AG04450 (cell line): ENCODE measurements at regions of chr3 and their contacts with region 1.

Region 1: GRCh38 chr3:38521391-38521987 is 25.3 kb downstream of the EXOG start:
- DNase-seq: peak; percentile 49
- H3K4me3 ChIP-seq: no peak overlapping the region
- H3K27ac ChIP-seq: no peak overlapping the region
- H3K27me3 ChIP-seq: no peaks in the 10 kb centered on the region
- CTCF ChIP-seq: peak; percentile 88

Region 2: GRCh38 chr3:38039101-38039898 is 482.2 kb before region 1 on chr3 and contains the start of gene DLEC1:
- CTCF ChIA-PET with region 1: no interaction called
- POLR2A ChIA-PET with region 1: no interaction called
- DNase-seq: no peak
- H3K4me3 ChIP-seq: peak within 1 kb of the TSS; percentile 60
- H3K27ac ChIP-seq: no peak within 1 kb of the TSS
- H3K27me3 ChIP-seq: no peaks in the 10 kb centered on the region
- CTCF ChIP-seq: no peak
- polyA plus RNA-seq, gene DLEC1: 0.04 and 0.06 TPM in 2 replicates

Region 3: GRCh38 chr3:38108649-38109579 is 412.6 kb before region 1 on chr3:
- CTCF ChIA-PET with region 1: no interaction called
- POLR2A ChIA-PET with region 1: no interaction called
- DNase-seq: no peak
- H3K4me3 ChIP-seq: no peak overlapping the region
- H3K27ac ChIP-seq: no peak overlapping the region
- H3K27me3 ChIP-seq: no peaks in the 10 kb centered on the region
- CTCF ChIP-seq: no peak

Region 4: DNA sequence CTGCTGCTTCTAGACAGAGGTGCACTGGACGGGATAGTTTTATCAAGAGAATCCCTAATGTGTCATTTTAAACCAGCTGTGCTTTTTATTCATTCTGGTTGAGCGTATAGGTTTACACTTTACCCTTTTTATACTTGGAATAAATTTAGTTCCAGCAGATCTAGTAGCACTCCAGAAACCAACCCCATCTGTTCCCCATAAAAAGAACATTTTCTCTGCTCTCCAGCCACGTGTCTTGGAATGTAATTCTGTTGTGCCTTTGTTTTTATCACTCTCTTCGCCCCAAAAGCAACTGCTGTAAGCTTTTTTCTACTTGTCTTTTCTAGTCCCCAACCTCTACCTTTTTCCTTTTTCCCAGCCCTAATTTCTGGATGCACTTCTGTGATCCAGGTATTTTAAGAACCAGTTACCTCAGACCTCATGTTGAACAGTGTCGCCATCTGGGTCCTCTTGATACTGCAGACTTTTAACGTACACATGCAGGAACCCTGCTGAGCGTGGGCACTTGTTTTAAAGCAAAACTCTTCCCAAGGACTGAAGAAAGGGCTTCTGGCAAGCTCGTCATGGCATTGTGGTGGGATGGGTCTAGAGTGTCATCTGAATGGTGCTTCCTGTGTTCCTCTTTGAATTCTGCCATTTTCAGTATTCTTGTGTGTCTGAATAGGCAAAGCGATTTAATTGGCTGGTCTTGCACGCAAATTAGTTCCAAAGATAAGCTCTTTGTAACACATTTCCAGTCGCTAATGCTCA is 31.0 kb before region 1 on chr3:
- CTCF ChIA-PET with region 1: interaction called, 15 read pairs
- POLR2A ChIA-PET with region 1: no interaction called
- DNase-seq: no peak
- H3K4me3 ChIP-seq: no peak overlapping the region
- H3K27ac ChIP-seq: no peak overlapping the region
- H3K27me3 ChIP-seq: no peaks in the 10 kb centered on the region
- CTCF ChIP-seq: no peak

Region 5: DNA sequence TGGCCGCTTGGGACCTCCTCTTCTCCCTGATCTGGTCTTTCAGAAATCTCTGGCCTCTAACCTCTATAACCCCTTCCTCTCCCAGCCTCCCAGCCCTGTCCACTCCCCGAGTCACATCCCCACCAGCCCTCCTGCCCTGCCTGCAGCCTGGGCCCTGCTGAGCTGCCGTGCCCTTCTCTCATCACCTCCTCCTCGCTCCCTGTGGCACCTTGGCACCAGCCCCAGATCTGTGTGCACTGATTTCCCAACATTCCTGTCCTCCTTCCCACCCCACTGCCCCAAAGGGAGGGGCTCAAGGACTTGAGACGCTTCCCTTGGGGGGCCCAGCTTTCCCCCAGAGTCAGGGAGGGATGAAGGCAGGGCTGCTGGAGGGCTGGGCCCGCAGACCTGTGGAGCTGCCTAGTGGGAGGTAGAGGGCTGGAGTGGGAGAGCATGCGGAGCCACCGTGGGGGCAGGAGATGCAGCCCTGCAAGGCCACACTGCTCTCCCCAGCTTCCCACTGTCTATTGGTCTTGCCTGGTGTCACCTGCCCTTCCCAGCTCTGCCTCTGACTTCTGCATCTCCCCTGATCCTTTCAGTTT is 17.4 kb after region 1 on chr3:
- CTCF ChIA-PET with region 1: interaction called, 15 read pairs
- POLR2A ChIA-PET with region 1: interaction called, 3 read pairs
- DNase-seq: no peak
- H3K4me3 ChIP-seq: no peak overlapping the region
- H3K27ac ChIP-seq: no peak overlapping the region
- H3K27me3 ChIP-seq: no peaks in the 10 kb centered on the region
- CTCF ChIP-seq: no peak

Region 6: GRCh38 chr3:38662544-38662943 is 141.1 kb after region 1 on chr3:
- CTCF ChIA-PET with region 1: interaction called, 86 read pairs
- POLR2A ChIA-PET with region 1: interaction called, 4 read pairs
- DNase-seq: no peak
- H3K4me3 ChIP-seq: no peak overlapping the region
- H3K27ac ChIP-seq: no peak overlapping the region
- H3K27me3 ChIP-seq: peaks cover 17% of the 10 kb centered on the region
- CTCF ChIP-seq: peak; percentile 45

Region 7: GRCh38 chr3:38843898-38844297 is 322.4 kb after region 1 on chr3:
- CTCF ChIA-PET with region 1: interaction called, 263 read pairs
- POLR2A ChIA-PET with region 1: no interaction called
- DNase-seq: peak; percentile 29
- H3K4me3 ChIP-seq: no peak overlapping the region
- H3K27ac ChIP-seq: no peak overlapping the region
- H3K27me3 ChIP-seq: peaks cover 5% of the 10 kb centered on the region
- CTCF ChIP-seq: peak; percentile 70

Region 8: DNA sequence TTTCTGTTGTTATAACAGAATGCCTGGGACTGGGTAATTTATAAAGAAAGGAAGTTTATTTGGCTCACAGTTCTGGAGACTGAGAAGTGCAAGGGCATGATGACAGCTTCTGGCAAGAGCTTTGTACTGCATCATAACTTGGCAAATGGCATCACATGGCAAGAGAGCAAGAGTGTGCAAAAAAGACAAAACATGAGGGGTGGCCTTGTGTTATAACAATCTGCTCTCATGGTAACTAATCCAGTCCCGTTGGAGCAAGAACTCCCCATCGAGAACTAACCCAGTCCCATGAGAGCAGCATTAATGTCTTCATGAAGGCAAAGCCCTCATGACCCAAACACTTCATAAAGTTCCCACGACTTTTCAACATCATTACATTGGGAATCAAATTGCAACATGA is 507.1 kb after region 1 on chr3:
- CTCF ChIA-PET with region 1: interaction called, 52 read pairs
- POLR2A ChIA-PET with region 1: no interaction called
- DNase-seq: no peak
- H3K4me3 ChIP-seq: no peak overlapping the region
- H3K27ac ChIP-seq: no peak overlapping the region
- H3K27me3 ChIP-seq: peaks cover 4% of the 10 kb centered on the region
- CTCF ChIP-seq: no peak